ENCODE measurements at regions of chr16 and their contacts with region 1.

Region 1: GRCh38 chr16:71808593-71809459 is at the start of gene AP1G1:
- DNase-seq: peak; percentile 94 to 97
- H3K4me3 ChIP-seq: peak within 1 kb of the TSS; percentile 71
- H3K27ac ChIP-seq: peak within 1 kb of the TSS; percentile 94 to 98
- H3K4me1 ChIP-seq: peaks cover 5 to 41% (median 20%) of the 10 kb centered on the region in 4 donors
- H3K27me3 ChIP-seq: no peaks in the 10 kb centered on the region
- CTCF ChIP-seq: no peak

Region 2: GRCh38 chr16:71645453-71645852 is 163.4 kb before region 1 on chr16:
- intact Hi-C with region 1: no loop called
- DNase-seq: no peak
- H3K4me3 ChIP-seq: no peak overlapping the region
- H3K27ac ChIP-seq: no peak overlapping the region
- H3K4me1 ChIP-seq: no peaks in the 10 kb centered on the region
- H3K27me3 ChIP-seq: no peaks in the 10 kb centered on the region
- CTCF ChIP-seq: no peak

Region 3: GRCh38 chr16:71723537-71724319 is 85.1 kb before region 1 on chr16:
- intact Hi-C with region 1: loop called (anchors 10 kb)
- DNase-seq: peak; percentile 62 to 89
- H3K4me3 ChIP-seq: peak overlapping the region; percentile 72 to 95
- H3K27ac ChIP-seq: peak overlapping the region; percentile 85 to 94
- H3K4me1 ChIP-seq: peaks cover 0 to 35% (median 16%) of the 10 kb centered on the region in 4 donors
- H3K27me3 ChIP-seq: no peaks in the 10 kb centered on the region
- CTCF ChIP-seq: peak; percentile 5 to 7

Region 4: GRCh38 chr16:71845639-71846430 is 37.0 kb after region 1 on chr16 and contains the start of gene ATXN1L:
- intact Hi-C with region 1: loop called (anchors 5 kb)
- DNase-seq: peak; percentile 87 to 96
- H3K4me3 ChIP-seq: peak within 1 kb of the TSS; percentile 81 to 99
- H3K27ac ChIP-seq: peak within 1 kb of the TSS; percentile 90 to 96
- H3K4me1 ChIP-seq: peaks cover 0 to 22% (median 13%) of the 10 kb centered on the region in 4 donors
- H3K27me3 ChIP-seq: no peaks in the 10 kb centered on the region
- CTCF ChIP-seq: peak in 1 of 2 experiments; percentile 35

Region 5: GRCh38 chr16:71883849-71884638 is 75.2 kb after region 1 on chr16 and contains the start of gene ZNF821:
- intact Hi-C with region 1: loop called (anchors 5 kb)
- DNase-seq: peak; percentile 67 to 83
- H3K4me3 ChIP-seq: peak within 1 kb of the TSS; percentile 82 to 92
- H3K27ac ChIP-seq: peak within 1 kb of the TSS; percentile 92 to 94
- H3K4me1 ChIP-seq: peaks cover 0 to 9% (median 2%) of the 10 kb centered on the region in 4 donors
- H3K27me3 ChIP-seq: no peaks in the 10 kb centered on the region
- CTCF ChIP-seq: peak; percentile 6 to 48

Region 6: DNA sequence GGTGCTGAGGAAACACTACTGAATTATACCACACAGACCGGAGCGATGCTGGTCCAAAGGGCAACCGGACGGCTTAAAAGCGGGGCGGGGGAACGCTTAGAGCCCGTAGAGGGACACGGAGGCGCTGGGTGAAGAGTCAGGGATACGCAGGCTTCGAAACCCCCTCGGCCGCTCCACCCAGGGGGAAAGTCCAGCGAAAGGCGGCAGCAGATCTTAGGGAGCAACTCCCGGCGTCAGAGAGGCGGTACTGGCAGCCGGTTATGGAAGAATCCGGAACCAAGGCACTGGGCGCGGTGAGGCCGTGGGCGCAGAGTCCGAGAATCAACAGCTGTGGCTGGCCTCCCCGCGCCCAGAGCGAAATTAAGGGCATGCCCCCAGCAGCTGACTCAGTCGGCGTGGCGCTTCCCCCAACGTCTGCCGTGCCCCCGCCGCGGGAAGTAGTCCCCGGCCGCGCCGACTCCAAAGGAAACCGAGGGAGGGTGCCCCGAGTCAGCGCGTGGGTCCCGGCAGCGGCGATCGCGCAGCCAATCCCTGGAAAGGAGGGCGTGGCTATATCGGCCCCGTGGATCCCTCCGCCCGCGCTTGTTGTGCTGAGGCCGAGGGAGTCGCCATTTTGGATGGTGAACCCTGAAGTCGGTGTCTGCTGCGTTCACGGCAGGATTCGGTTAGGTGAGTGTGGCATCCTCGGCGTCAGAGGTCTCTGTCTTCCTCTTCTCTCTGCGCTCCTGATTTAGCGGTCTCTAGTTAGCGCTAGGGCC is 86.3 kb after region 1 on chr16 and contains the start of gene IST1:
- intact Hi-C with region 1: loop called (anchors 5 kb)
- DNase-seq: peak; percentile 98 to 99
- H3K4me3 ChIP-seq: peak within 1 kb of the TSS; percentile 79 to 83
- H3K27ac ChIP-seq: peak within 1 kb of the TSS; percentile 94 to 97
- H3K4me1 ChIP-seq: peaks cover 0 to 45% (median 22%) of the 10 kb centered on the region in 4 donors
- H3K27me3 ChIP-seq: no peaks in the 10 kb centered on the region
- CTCF ChIP-seq: no peak

Region 7: GRCh38 chr16:71985262-71985974 is 176.6 kb after region 1 on chr16:
- intact Hi-C with region 1: no loop called
- DNase-seq: no peak
- H3K4me3 ChIP-seq: no peak overlapping the region
- H3K27ac ChIP-seq: no peak overlapping the region
- H3K4me1 ChIP-seq: no peaks in the 10 kb centered on the region
- H3K27me3 ChIP-seq: peaks cover 0 to 4% of the 10 kb centered on the region in 2 donors
- CTCF ChIP-seq: no peak

Region 8: GRCh38 chr16:72182976-72183375 is 374.1 kb after region 1 on chr16:
- intact Hi-C with region 1: no loop called
- DNase-seq: no peak
- H3K4me3 ChIP-seq: no peak overlapping the region
- H3K27ac ChIP-seq: no peak overlapping the region
- H3K4me1 ChIP-seq: no peaks in the 10 kb centered on the region
- H3K27me3 ChIP-seq: no peaks in the 10 kb centered on the region
- CTCF ChIP-seq: no peak

Region 9: DNA sequence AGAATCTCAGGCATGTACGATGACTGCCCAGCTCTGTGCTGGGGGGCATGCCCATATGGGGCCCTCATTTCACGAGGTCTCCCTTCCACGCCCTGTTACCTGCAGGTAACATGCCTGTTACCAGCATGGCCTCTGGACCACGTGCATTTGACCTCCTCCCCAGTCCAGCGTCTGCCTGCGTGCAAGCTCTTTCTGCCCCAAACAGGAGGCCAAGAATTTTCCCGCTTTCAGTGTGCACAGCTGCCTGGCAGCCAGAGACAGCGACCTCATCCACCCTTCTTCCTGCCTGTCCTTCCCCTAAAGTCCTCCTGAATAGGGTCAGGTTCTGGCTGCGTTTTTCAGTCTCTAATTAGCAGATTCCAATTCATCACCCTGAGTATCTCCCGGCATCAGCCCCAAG is 1545.6 kb after region 1 on chr16:
- intact Hi-C with region 1: no loop called
- DNase-seq: no peak
- H3K4me3 ChIP-seq: no peak overlapping the region
- H3K27ac ChIP-seq: no peak overlapping the region
- H3K4me1 ChIP-seq: no peaks in the 10 kb centered on the region
- H3K27me3 ChIP-seq: no peaks in the 10 kb centered on the region
- CTCF ChIP-seq: no peak